Tibial artery (tissue), 4 donors: ENCODE measurements at regions of chr20 and their contacts with region 1.

Region 1: DNA sequence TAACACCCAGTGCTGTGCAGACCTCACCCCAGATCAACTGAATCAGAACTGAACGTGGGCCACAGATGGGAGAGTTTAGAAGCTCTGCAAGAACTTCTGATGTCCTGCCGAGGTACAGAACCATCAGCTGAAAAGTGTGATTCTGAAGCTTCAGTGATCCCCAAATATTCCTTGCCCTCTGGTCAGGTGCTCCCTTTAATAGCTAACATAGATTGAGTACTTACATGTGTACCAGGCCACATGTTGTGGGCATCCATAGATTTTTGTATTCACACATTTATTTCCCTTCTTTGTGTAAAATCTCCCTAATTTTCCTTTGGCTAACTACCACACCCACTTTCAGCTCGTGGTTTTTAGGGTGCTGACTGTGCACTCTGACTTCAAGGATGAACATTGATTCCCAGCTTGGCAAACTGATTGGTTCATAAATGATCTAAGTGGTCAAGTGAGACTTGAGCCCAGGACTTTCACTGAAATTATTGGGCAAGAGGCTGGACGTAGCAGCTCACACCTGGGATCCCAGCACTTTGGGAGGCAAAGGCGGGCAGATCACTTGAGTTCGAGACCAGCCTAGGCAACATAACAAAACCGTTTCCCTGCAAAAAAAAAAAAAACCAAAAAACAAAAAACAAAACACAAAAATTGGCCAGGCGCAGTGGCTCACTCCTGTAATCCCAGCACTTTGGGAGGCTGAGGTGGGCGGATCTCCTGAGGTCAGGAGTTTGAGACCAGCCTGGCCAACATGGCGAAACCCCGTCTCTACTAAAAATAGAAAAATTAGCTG is 162.2 kb downstream of the BCAS1 start:
- DNase-seq: peak in 1 of 2 donors; percentile 5
- H3K4me3 ChIP-seq: no peak overlapping the region
- H3K27ac ChIP-seq: no peak overlapping the region
- H3K4me1 ChIP-seq: no peaks in the 10 kb centered on the region
- H3K27me3 ChIP-seq: no peaks in the 10 kb centered on the region
- CTCF ChIP-seq: no peak

Region 2: GRCh38 chr20:53839423-53840176 is 68.6 kb before region 1 on chr20:
- intact Hi-C with region 1: no loop called
- DNase-seq: no peak
- H3K4me3 ChIP-seq: no peak overlapping the region
- H3K27ac ChIP-seq: no peak overlapping the region
- H3K4me1 ChIP-seq: no peaks in the 10 kb centered on the region
- H3K27me3 ChIP-seq: no peaks in the 10 kb centered on the region
- CTCF ChIP-seq: no peak

Region 3: GRCh38 chr20:53891306-53891944 is 16.7 kb before region 1 on chr20:
- intact Hi-C with region 1: loop called (anchors 1 kb)
- DNase-seq: peak in 1 of 2 donors; percentile 11
- H3K4me3 ChIP-seq: no peak overlapping the region
- H3K27ac ChIP-seq: no peak overlapping the region
- H3K4me1 ChIP-seq: peaks cover 0 to 6% (median 0%) of the 10 kb centered on the region in 4 donors
- H3K27me3 ChIP-seq: no peaks in the 10 kb centered on the region
- CTCF ChIP-seq: no peak

Region 4: GRCh38 chr20:53990768-53991450 is 82.7 kb after region 1 on chr20:
- intact Hi-C with region 1: no loop called
- DNase-seq: no peak
- H3K4me3 ChIP-seq: no peak overlapping the region
- H3K27ac ChIP-seq: no peak overlapping the region
- H3K4me1 ChIP-seq: no peaks in the 10 kb centered on the region
- H3K27me3 ChIP-seq: peaks cover 0 to 3% of the 10 kb centered on the region in 2 donors
- CTCF ChIP-seq: no peak

Region 5: GRCh38 chr20:55232647-55233046 is 1324.5 kb after region 1 on chr20:
- intact Hi-C with region 1: no loop called
- DNase-seq: no peak
- H3K4me3 ChIP-seq: no peak overlapping the region
- H3K27ac ChIP-seq: no peak overlapping the region
- H3K4me1 ChIP-seq: no peaks in the 10 kb centered on the region
- H3K27me3 ChIP-seq: no peaks in the 10 kb centered on the region
- CTCF ChIP-seq: no peak